ENCODE measurements at regions of chr9 and their contacts with region 1.

Region 1: DNA sequence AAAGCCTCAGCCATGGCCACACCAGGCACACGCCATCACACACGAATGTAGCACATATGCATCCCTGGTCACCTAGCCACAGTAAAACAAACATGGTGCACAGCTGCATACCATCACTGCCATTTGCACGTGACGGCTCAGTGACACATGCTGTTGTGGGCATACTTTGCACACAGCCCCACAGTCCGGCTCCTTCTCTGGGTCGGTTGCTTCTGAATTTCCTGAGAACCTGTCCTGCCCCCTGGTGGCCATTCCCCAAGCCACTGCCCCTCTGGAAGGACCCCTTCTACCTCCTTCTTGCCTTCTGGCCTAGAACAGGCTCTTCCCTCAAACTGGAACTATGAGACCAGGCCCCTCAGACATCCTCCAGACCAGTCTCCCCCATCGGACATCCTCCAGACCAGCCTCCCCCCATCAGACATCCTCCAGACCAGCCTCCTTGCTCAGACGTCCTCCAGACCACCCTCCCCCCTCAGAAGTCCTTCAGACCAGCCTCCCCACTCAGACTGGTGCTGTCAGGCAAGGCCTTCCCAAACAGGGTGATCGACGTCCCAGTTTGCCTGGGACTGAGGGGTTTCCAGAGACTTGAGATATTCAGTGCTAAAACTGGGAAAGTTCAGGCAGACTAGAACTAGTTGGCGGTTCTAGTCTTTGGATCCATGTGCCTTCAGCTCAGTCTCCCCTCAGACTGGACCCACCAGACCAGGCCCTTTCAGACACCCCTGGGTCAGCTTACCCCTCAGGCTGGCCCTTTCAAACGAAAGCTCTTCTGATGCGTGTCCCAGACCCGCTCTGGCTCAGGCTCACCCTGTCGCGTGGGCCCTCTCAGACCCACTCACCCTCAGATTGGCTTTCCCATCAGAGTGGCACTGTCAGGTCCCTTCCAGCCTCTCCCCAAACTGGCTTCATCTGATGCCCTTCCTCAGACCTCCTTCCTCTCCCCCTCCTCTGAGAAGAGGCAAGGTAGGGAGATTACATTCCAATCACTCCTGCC is 24.3 kb upstream of the ENHO start:
- DNase-seq: peak; percentile 70
- ATAC-seq: peak; percentile 76
- H3K4me3 ChIP-seq: no peak overlapping the region
- H3K27ac ChIP-seq: no peak overlapping the region
- H3K4me1 ChIP-seq: no peaks in the 10 kb centered on the region
- H3K27me3 ChIP-seq: peaks cover 25% of the 10 kb centered on the region; the same call in 1 of the 2 replicates
- CTCF ChIP-seq: peak; percentile 60
- POLR2A ChIP-seq: no peak
- RAD21 ChIP-seq: peak; percentile 64

Region 2: GRCh38 chr9:34328987-34329832 is 217.9 kb before region 1 on chr9 and contains the starts of genes KIF24 and NUDT2:
- CTCF ChIA-PET with region 1: no interaction called
- POLR2A ChIA-PET with region 1: no interaction called
- dilution Hi-C with region 1: no loop called
- in situ Hi-C with region 1: no loop called
- intact Hi-C with region 1: loop called (anchors 5 kb)
- DNase-seq: peak; percentile 100
- ATAC-seq: peak; percentile 95
- H3K4me3 ChIP-seq: peak within 1 kb of the TSS; percentile 80
- H3K27ac ChIP-seq: peak within 1 kb of the TSS; percentile 93
- H3K4me1 ChIP-seq: peaks cover 8% of the 10 kb centered on the region
- H3K27me3 ChIP-seq: no peaks in the 10 kb centered on the region
- CTCF ChIP-seq: 0 out of 2 replicates have a peak, but pooled peaks have one; percentile 6
- POLR2A ChIP-seq: peak; percentile 94
- RAD21 ChIP-seq: no peak
- total RNA-seq, gene KIF24: 2.5 and 3.0 TPM in 2 replicates
- total RNA-seq, gene NUDT2: 33.9 and 45.0 TPM in 2 replicates

Region 3: DNA sequence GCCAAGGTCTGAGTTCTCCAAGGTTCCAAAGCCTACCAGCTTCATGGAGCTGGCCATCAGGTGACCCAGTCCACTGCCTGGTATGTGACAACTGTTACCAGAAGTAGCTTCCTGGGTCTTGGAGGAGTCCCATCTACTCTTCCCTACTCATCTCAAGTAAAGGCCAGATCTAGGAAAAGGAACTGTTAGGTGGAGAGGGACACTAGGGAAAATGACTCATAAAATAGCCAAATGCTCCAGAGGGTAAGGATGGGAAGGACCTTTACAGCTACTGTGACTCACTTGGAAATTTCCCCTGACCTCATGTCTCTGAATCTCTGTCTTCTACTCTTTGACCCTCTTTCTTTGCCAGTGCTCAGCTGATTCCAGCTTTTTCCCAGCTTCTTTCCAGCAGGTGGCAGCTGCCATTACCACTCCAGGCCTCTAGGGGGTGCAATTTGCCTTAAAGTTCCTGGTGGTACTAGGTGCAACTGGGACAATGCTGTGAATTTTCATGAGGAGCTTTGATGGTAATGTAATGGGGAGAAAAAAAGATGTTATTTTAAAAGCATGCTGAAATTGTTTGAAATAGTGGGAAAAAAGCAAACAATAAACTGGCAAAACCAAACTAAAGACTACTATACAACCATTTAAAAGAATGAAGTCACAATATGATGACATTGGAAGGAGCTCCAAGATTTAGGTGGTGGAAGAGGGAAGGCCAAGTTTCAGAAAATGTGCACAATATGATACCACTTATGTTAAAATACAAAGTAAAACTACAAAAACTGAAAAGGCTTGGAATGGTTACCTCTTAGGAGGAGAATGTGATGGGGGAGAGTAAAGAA is 143.4 kb before region 1 on chr9:
- CTCF ChIA-PET with region 1: interaction called, 3 read pairs
- POLR2A ChIA-PET with region 1: no interaction called
- dilution Hi-C with region 1: no loop called
- in situ Hi-C with region 1: no loop called
- intact Hi-C with region 1: loop called (anchors 1 kb)
- DNase-seq: peak; percentile 68
- ATAC-seq: peak; percentile 90
- H3K4me3 ChIP-seq: no peak overlapping the region
- H3K27ac ChIP-seq: no peak overlapping the region
- H3K4me1 ChIP-seq: no peaks in the 10 kb centered on the region; the same call in 1 of the 2 replicates
- H3K27me3 ChIP-seq: no peaks in the 10 kb centered on the region
- CTCF ChIP-seq: peak; percentile 97
- POLR2A ChIP-seq: no peak
- RAD21 ChIP-seq: peak; percentile 84

Region 4: DNA sequence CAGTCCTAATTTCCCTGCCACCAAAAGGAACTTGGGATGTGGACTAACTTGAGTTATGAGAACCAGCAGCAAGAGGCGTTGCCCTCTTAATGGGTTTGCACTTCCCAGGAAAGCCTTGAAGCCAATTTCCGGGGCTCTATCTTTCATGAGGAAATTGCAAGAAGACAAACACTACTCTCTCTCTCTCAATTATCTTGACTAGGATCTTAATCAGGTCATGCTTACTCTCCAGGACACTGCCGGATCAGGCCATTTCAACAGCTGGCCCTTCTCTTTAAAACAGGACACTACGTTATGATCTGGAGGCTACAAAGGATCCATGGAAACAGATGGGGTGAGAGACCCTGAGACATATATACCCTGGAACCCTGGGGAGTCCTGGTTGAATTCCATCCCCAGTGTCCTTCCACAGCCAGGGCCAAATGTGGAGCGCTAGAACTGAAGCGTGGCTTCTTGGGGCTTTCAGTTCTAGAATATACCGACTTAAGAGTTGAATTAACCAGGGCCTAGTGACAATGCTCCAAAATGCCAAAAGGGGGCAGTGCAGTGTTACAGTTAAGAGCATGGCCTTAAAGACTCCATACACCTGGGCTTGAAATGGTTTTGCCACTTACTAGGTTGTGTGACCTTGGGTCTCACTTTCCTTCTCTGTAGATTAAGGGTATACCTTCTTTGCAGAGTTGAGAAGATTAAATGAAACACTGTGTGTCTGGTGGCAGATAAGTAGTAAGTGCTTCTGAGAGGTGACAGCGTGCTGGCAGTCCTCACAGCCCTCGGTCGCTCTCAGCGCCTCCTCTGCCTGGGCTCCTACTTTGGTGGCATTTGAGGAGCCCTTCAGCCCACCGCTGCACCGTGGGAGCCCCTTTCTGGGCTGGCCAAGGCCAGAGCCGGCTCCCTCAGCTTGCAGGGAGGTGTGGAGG is 109.9 kb before region 1 on chr9:
- CTCF ChIA-PET with region 1: no interaction called
- POLR2A ChIA-PET with region 1: no interaction called
- dilution Hi-C with region 1: no loop called
- in situ Hi-C with region 1: no loop called
- intact Hi-C with region 1: loop called (anchors 2 kb)
- DNase-seq: peak; percentile 79
- ATAC-seq: peak; percentile 92
- H3K4me3 ChIP-seq: no peak overlapping the region
- H3K27ac ChIP-seq: no peak overlapping the region
- H3K4me1 ChIP-seq: peaks cover 7% of the 10 kb centered on the region
- H3K27me3 ChIP-seq: no peaks in the 10 kb centered on the region
- CTCF ChIP-seq: peak; percentile 84
- POLR2A ChIP-seq: 0 out of 2 replicates have a peak, but pooled peaks have one; percentile 33
- RAD21 ChIP-seq: peak; percentile 88

Region 5: GRCh38 chr9:34591248-34591916 is 44.3 kb after region 1 on chr9:
- CTCF ChIA-PET with region 1: interaction called, 35 read pairs
- POLR2A ChIA-PET with region 1: interaction called, 3 read pairs
- dilution Hi-C with region 1: no loop called
- in situ Hi-C with region 1: loop called (anchors 5 kb)
- intact Hi-C with region 1: loop called (anchors 1 kb)
- DNase-seq: peak; percentile 60
- ATAC-seq: peak; percentile 97
- H3K4me3 ChIP-seq: no peak overlapping the region
- H3K27ac ChIP-seq: no peak overlapping the region
- H3K4me1 ChIP-seq: no peaks in the 10 kb centered on the region; the same call in 1 of the 2 replicates
- H3K27me3 ChIP-seq: peaks cover 85% of the 10 kb centered on the region
- CTCF ChIP-seq: peak; percentile 93
- POLR2A ChIP-seq: no peak
- RAD21 ChIP-seq: peak; percentile 92

Region 6: GRCh38 chr9:34637356-34638137 is 90.4 kb after region 1 on chr9 and contains the start of gene SIGMAR1:
- CTCF ChIA-PET with region 1: interaction called, 5 read pairs
- POLR2A ChIA-PET with region 1: no interaction called
- dilution Hi-C with region 1: no loop called
- in situ Hi-C with region 1: no loop called
- intact Hi-C with region 1: loop called (anchors 1 kb)
- DNase-seq: peak; percentile 89
- ATAC-seq: peak; percentile 97
- H3K4me3 ChIP-seq: peak within 1 kb of the TSS; percentile 84
- H3K27ac ChIP-seq: peak within 1 kb of the TSS; percentile 82
- H3K4me1 ChIP-seq: peaks cover 4% of the 10 kb centered on the region
- H3K27me3 ChIP-seq: no peaks in the 10 kb centered on the region
- CTCF ChIP-seq: no peak
- POLR2A ChIP-seq: no peak
- RAD21 ChIP-seq: no peak
- total RNA-seq, gene SIGMAR1: 38.6 and 44.6 TPM in 2 replicates

Measured in IMR-90 (cell line).